Left cardiac atrium (tissue), 4 donors: ENCODE measurements at regions of chr12 and their contacts with region 1.

Region 1: GRCh38 chr12:55926738-55927587 is 731 bp downstream of the PYM1 start:
- DNase-seq: peak; percentile 89
- ATAC-seq: peak; percentile 87 to 89

Region 2: DNA sequence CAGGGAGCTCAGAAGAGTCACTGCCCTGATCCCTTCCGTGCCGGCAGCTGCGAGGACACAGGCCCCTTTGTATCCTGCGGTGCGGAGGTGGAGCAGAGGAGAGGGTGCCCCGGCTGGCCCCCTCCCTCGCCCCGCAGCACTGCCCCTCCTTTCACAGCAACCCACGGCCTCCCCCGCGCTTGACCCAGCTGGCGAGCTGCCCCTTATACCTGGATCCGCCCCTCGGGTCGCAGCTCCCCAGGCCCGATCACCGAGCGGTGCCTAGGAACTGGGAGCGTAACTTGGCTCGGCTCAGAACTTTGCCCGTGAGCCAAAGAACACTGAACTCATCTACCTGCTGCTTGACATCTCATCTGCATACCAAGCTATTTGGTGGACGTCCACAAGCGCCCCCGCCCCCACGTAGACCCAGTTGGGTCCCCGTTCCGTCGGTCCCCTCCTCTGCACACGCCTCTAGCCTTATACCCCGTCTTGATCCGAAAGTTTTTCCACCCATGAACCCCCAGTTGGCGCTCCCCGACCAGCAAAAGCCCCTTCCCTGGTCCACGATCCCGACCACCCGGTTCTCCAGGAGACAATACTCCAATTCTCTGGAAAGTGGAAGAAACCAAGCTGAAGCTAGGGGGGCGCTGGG is 96.9 kb before region 1 on chr12:
- intact Hi-C with region 1: loop called in 1 of 2 experiments (anchors 5 kb)
- DNase-seq: peak; percentile 66
- ATAC-seq: peak; percentile 20 to 50

Region 3: DNA sequence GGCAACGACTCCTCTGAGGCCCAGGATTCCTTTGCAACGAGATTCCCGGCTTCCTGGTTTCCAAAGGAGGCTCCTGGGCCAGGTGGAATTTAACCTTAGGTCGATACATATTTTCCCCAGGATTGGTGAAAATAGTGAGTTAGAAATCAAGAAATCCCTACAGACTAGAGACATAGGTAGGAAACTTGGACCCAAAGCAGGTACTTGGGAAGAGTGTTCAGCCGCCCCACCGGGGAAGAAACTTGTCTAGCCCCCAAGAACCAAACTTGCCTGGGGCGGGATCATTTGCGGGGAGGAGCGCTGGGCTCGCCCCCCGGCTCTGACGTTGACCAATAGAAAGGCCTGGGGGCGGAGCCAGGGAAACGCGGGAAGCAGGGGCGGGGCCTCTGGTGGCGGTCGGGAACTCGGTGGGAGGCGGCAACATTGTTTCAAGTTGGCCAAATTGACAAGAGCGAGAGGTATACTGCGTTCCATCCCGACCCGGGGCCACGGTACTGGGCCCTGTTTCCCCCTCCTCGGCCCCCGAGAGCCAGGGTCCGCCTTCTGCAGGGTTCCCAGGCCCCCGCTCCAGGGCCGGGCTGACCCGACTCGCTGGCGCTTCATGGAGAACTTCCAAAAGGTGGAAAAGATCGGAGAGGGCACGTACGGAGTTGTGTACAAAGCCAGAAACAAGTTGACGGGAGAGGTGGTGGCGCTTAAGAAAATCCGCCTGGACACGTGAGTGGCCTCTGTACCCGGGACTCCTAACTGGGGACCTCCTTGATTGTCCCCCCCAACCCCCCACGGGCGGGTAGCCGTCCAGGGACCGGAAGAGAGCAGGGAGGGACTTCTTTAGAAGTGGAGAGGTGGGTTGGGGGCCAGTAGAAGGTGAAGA is 39.7 kb after region 1 on chr12 and contains the start of gene CDK2:
- intact Hi-C with region 1: loop called in 1 of 2 experiments (anchors 5 kb)
- DNase-seq: peak; percentile 96
- ATAC-seq: peak; percentile 98 to 99
- total RNA-seq, gene CDK2: 14.1 to 18.2 TPM

Region 4: GRCh38 chr12:56137853-56138571 is 211.0 kb after region 1 on chr12:
- intact Hi-C with region 1: no loop called
- DNase-seq: no peak
- ATAC-seq: no peak